ENCODE measurements at regions of chr6 and their contacts with region 1.

Region 1: DNA sequence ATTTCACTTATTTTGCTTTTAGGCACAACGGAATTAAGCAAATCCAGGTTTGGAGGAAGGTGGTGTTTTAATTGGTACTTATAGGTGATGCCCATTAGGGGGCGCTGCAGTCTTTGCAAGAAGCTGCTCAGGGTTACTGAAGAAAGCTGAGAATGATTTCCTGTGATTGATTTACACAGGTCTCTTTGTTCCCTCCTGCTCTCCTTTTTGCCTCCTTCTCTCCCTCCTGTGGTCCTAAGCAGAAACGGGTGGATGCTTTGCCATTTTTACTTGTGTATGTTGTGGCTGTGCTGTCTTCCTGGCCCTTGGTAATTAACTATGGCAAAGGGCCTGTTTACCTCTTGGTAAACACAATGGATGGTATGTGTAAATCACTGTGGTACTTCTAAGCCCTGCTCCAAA is 97.8 kb downstream of the ANKS1A start:
- DNase-seq: no peak
- H3K4me3 ChIP-seq: no peak overlapping the region
- CTCF ChIP-seq: peak; percentile 48

Region 2: GRCh38 chr6:34926666-34927065 is 60.2 kb before region 1 on chr6:
- CTCF ChIA-PET with region 1: interaction called, 12 read pairs
- POLR2A ChIA-PET with region 1: no interaction called
- DNase-seq: no peak
- H3K4me3 ChIP-seq: no peak overlapping the region
- CTCF ChIP-seq: no peak

Region 3: GRCh38 chr6:35016502-35017321 is 29.9 kb after region 1 on chr6:
- CTCF ChIA-PET with region 1: interaction called, 49 read pairs
- POLR2A ChIA-PET with region 1: no interaction called
- DNase-seq: no peak
- H3K4me3 ChIP-seq: peak overlapping the region; percentile 28
- CTCF ChIP-seq: no peak

Region 4: GRCh38 chr6:35096129-35096862 is 109.5 kb after region 1 on chr6:
- CTCF ChIA-PET with region 1: interaction called, 10 read pairs
- POLR2A ChIA-PET with region 1: no interaction called
- DNase-seq: peak; percentile 88
- H3K4me3 ChIP-seq: no peak overlapping the region
- CTCF ChIP-seq: no peak

Region 5: DNA sequence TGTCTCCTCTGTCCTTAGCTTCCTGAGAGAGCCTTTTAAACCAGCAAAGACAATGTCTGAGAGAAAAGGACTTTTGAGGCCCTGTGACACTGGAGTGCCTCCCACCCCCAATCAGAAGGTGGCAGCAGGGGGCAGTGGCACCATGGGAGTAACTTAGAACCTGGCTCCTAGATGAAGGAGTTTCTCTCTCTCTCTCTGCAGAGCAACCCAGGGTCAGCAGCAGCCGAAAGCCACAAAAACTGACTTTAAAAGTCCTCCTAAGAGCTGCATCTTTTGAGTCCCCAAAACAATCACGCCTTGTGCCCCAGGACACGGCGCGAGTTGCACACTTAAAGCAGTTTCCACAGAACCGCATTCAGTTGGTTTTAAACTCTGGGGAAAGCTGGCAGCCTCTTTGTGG is 159.6 kb after region 1 on chr6:
- CTCF ChIA-PET with region 1: interaction called, 309 read pairs
- POLR2A ChIA-PET with region 1: no interaction called
- DNase-seq: no peak
- H3K4me3 ChIP-seq: no peak overlapping the region
- CTCF ChIP-seq: peak; percentile 84

Region 6: GRCh38 chr6:35240840-35241801 is 254.3 kb after region 1 on chr6:
- CTCF ChIA-PET with region 1: interaction called, 153 read pairs
- POLR2A ChIA-PET with region 1: no interaction called
- DNase-seq: no peak
- H3K4me3 ChIP-seq: no peak overlapping the region
- CTCF ChIP-seq: peak; percentile 92

Measured in AG04449 (cell line).